ENCODE measurements at regions of chrX and their contacts with region 1.

Region 1: GRCh38 chrX:67872958-67873357 is 329.1 kb downstream of the AR start:
- DNase-seq: no peak
- H3K4me3 Mint-ChIP-seq: no peak overlapping the region
- H3K27ac Mint-ChIP-seq: no peak overlapping the region
- H3K4me1 Mint-ChIP-seq: no peaks in the 10 kb centered on the region
- H3K27me3 Mint-ChIP-seq: no peaks in the 10 kb centered on the region
- CTCF ChIP-seq: no peak

Region 2: GRCh38 chrX:67044029-67044653 is 828.8 kb before region 1 on chrX:
- CTCF ChIA-PET with region 1: no interaction called
- POLR2A ChIA-PET with region 1: no interaction called
- intact Hi-C with region 1: no loop called
- DNase-seq: no peak
- H3K4me3 Mint-ChIP-seq: no peak overlapping the region
- H3K27ac Mint-ChIP-seq: no peak overlapping the region
- H3K4me1 Mint-ChIP-seq: no peaks in the 10 kb centered on the region
- H3K27me3 Mint-ChIP-seq: no peaks in the 10 kb centered on the region
- CTCF ChIP-seq: no peak

Region 3: DNA sequence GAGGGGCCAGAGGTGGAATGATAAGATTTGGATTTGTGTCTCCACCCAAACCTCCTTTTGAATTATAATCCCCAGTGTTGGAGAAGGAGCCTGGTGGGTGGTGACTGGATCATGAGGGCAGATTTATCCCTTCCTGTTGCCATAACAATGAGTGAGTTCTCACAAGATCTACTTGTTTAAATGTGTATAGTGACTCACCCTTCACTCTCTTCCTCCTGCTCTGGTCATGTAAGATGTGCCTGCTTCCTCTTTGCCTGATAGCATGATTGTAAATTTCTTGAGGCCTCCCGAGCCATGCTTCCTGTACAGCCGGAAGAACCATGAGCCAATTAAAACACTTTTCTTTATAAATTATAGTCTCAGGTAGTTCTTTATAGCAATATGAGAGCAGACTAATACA is 19.4 kb after region 1 on chrX:
- CTCF ChIA-PET with region 1: interaction called, 10 read pairs
- POLR2A ChIA-PET with region 1: no interaction called
- intact Hi-C with region 1: no loop called
- DNase-seq: no peak
- H3K4me3 Mint-ChIP-seq: no peak overlapping the region
- H3K27ac Mint-ChIP-seq: no peak overlapping the region
- H3K4me1 Mint-ChIP-seq: no peaks in the 10 kb centered on the region
- H3K27me3 Mint-ChIP-seq: no peaks in the 10 kb centered on the region
- CTCF ChIP-seq: no peak

Region 4: GRCh38 chrX:68059469-68059868 is 186.5 kb after region 1 on chrX:
- CTCF ChIA-PET with region 1: no interaction called
- POLR2A ChIA-PET with region 1: no interaction called
- intact Hi-C with region 1: no loop called
- DNase-seq: no peak
- H3K4me3 Mint-ChIP-seq: no peak overlapping the region
- H3K27ac Mint-ChIP-seq: no peak overlapping the region
- H3K4me1 Mint-ChIP-seq: no peaks in the 10 kb centered on the region
- H3K27me3 Mint-ChIP-seq: no peaks in the 10 kb centered on the region
- CTCF ChIP-seq: no peak